Heart right ventricle (tissue), 16 donors: ENCODE measurements at regions of chr12 and their contacts with region 1.

Region 1: DNA sequence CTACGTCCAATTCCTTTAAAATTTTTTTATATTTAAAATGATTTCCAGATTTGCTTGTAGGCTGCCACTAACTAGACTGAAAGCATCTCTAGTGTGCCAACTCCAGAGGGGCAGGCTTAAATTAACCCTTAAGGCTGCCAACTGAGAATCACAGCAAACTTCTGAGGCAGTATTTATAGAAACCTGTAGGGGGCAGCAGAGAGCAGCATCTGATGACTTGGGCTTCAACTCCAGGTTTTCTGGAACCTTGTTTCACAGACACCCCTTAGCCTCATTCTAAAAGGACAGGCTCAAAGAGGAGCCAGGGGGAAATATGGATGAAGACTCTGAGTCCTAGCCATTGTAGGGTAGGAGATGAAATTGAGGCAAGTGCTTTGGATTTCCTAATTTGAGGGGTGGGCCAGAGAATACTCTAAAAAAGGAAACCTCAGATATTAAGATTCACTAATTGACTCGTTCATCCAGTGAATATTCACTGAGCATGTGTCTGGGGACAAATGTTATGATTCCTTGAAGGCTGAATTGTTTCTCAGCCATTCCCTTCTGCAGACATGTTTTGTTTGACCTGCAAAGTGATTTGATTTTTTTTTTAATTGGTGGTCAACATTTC is 63.3 kb upstream of the HSPB8 start:
- DNase-seq: peak in 1 of 2 donors; percentile 51
- ATAC-seq: peak in 6 of 8 donors; percentile 43 to 69 (median 57)
- H3K4me3 ChIP-seq: no peak overlapping the region
- H3K27ac ChIP-seq: no peak overlapping the region
- H3K4me1 ChIP-seq: peaks cover 0 to 6% (median 0%) of the 10 kb centered on the region in 9 donors
- H3K27me3 ChIP-seq: peaks cover 0 to 7% (median 0%) of the 10 kb centered on the region in 7 donors
- CTCF ChIP-seq: peak; percentile 85 to 96 (median 93)

Region 2: DNA sequence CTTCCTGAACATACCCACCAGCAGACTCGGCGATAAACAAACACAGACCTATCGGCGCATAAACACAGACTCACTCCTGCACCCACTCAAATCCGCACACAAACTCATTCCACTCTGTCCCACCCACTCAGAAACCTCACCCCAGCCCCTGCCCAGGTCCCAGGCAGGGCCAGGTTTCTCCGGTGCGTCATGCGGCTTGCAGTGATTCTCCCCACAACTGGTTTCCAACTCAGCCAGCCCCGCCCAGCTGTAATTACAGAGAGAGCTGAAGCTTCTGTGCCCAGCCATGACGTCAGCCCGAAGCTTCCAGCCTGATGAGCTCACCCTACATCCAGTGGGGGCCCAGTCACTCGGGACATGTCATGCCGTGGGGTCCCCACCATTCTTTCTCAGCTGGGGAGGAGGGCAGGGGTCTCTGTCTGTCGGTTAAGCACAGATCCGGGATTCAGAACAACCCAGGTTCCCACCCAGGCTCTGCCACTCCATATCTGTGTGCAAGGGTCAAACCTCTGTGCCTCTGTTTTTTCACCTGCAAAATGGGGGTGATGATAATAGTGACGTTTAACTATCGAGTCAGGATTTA is 61.0 kb after region 1 on chr12:
- intact Hi-C with region 1: loop called in 2 of 10 experiments (anchors 5 to 10 kb)
- DNase-seq: peak; percentile 86 to 94
- ATAC-seq: peak; percentile 38 to 74 (median 69)
- H3K4me3 ChIP-seq: peak overlapping the region; percentile 15 to 61 (median 48)
- H3K27ac ChIP-seq: peak overlapping the region; percentile 35 to 99 (median 86)
- H3K4me1 ChIP-seq: peaks cover 0 to 49% (median 22%) of the 10 kb centered on the region in 9 donors
- H3K27me3 ChIP-seq: peaks cover 0 to 13% (median 0%) of the 10 kb centered on the region in 7 donors
- CTCF ChIP-seq: no peak

Region 3: DNA sequence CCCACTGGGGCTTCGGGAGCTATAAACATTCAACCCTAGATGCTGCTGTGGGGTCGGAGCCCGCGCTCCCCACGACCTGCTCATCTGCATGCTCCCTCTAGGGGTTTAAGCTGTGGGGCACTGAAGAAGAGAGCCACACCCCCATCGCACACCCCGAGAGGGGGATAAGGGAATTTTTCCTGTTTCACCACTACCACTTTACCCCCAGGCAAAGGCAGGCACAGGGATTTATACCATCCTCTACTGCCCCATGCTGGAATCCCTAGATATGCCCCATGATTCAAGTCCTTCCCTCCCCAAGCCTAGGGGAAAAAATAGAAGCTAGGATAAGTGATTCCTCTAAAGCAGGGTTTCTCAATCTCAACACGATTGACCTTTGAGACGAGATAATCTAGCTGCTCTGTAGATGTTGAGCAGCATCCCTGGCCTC is 159.2 kb after region 1 on chr12:
- intact Hi-C with region 1: loop called in 4 of 10 experiments (anchors 10 kb)
- DNase-seq: no peak
- ATAC-seq: peak; percentile 52 to 95 (median 84)
- H3K4me3 ChIP-seq: no peak overlapping the region
- H3K27ac ChIP-seq: no peak overlapping the region
- H3K4me1 ChIP-seq: peaks cover 0 to 18% (median 3%) of the 10 kb centered on the region in 9 donors
- H3K27me3 ChIP-seq: no peaks in the 10 kb centered on the region
- CTCF ChIP-seq: peak in 8 of 9 donors; percentile 5 to 52 (median 30)

Region 4: GRCh38 chr12:119328111-119328510 is 212.7 kb after region 1 on chr12:
- intact Hi-C with region 1: loop called in 1 of 10 experiments (anchors 10 kb)
- DNase-seq: peak; percentile 8 to 42
- ATAC-seq: peak; percentile 69 to 90 (median 82)
- H3K4me3 ChIP-seq: no peak overlapping the region
- H3K27ac ChIP-seq: no peak overlapping the region
- H3K4me1 ChIP-seq: peaks cover 0 to 16% (median 6%) of the 10 kb centered on the region in 9 donors
- H3K27me3 ChIP-seq: no peaks in the 10 kb centered on the region
- CTCF ChIP-seq: peak; percentile 14 to 61 (median 53)

Region 5: DNA sequence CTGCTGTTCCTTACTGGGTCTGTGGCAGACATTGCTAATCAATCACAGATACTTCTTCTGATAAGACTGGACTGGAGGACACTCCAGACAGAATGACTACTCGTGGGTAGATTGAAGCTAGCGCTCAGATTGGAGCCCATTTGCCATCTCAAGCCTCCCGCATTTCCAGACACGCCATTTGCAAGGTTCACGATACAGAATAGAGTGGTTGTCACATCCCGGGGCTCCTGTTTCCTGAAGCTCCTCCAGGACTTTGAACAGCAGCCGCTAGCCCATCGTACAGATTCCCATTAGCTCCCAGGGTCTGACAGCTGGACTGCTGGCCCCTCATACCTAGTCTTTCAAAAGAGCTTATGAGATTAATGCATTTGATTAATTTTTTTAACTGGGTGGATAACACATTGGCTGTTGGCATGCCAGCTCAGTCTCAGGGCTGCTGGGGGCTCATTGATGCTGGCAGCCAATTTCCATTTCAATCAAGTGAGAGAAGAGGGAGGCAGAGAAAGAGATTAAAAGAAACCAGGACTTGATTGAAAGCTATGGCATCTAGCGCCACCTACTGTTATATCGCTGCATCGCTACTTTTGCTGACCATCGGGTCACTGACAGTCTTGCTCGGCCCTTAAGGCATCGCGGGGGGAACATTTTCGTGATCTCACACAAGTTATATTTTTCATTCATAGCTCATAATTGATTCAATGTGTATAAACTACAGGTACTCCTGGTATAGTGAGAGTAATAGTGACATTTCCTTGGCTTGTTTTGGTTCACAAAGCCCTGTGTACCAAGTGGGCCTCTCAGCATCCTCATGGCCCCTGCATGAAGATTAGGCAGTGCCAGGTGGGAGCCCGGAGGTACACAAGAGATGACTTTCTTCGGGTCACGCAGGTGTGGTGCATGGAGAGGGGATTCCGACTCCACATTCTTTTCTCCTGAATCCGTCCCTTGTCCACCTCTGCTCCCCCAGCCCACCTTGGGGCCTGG is 297.7 kb after region 1 on chr12:
- intact Hi-C with region 1: loop called (anchors 1 to 5 kb)
- DNase-seq: peak; percentile 44 to 72
- ATAC-seq: peak; percentile 26 to 80 (median 64)
- H3K4me3 ChIP-seq: no peak overlapping the region
- H3K27ac ChIP-seq: no peak overlapping the region
- H3K4me1 ChIP-seq: peaks cover 0 to 16% (median 5%) of the 10 kb centered on the region in 9 donors
- H3K27me3 ChIP-seq: no peaks in the 10 kb centered on the region
- CTCF ChIP-seq: peak; percentile 68 to 94 (median 87)

Region 6: DNA sequence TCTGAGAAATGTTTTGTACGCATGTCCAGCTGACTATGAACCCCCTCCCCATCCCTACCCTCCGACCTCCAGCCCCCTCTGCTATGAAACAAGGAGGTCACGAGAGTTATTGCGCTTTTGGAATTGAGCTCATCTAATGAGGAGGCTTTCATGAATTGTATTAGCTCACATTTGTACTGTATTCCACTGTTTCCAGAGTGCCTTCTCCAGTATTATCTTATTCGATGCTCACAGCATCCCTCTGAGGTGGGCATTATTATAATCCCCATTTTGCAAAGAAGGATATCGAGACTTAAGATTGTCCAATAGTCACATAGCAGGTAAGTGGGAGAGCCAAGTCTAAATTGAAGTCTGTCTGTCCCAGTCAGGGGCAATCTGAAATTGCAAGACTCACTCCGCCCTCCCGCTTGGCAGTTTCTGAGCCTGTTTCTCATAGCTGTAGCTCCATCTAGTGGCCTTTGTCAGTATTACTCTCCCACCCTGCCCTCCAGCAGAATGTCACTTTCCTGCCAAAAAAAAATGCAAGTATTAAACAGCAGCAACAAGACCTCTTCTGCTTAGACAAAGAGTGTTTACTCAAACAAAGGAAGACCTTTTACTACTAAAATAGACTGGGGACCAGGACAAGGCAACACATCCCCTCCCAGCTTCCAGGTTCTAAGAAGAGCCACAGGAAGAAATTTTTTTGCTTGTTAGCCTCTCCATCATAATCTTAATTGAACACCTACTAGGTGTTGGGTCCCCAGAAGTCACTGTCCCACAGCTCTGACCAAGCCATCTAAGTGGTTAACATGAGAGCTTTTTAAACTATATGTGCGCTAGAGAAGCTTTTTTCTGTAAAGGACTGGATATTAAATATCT is 429.6 kb after region 1 on chr12:
- intact Hi-C with region 1: loop called in 4 of 10 experiments (anchors 2 to 10 kb)
- DNase-seq: peak; percentile 23 to 59
- ATAC-seq: peak in 7 of 8 donors; percentile 39 to 75 (median 67)
- H3K4me3 ChIP-seq: no peak overlapping the region
- H3K27ac ChIP-seq: no peak overlapping the region
- H3K4me1 ChIP-seq: no peaks in the 10 kb centered on the region
- H3K27me3 ChIP-seq: peaks cover 0 to 25% (median 5%) of the 10 kb centered on the region in 7 donors
- CTCF ChIP-seq: peak; percentile 78 to 91 (median 88)